ENCODE measurements at regions of chr3 and their contacts with region 1.

Region 1: GRCh38 chr3:51799879-51800749 is 21.1 kb upstream of the IQCF6 start:
- DNase-seq: peak in 1 of 3 donors; percentile 71
- ATAC-seq: peak; percentile 60
- H3K4me3 ChIP-seq: no peak overlapping the region
- H3K4me1 ChIP-seq: no peaks in the 10 kb centered on the region
- CTCF ChIP-seq: peak; percentile 60

Region 2: GRCh38 chr3:50611464-50612233 is 1188.5 kb before region 1 on chr3 and contains the start of gene CISH:
- intact Hi-C with region 1: no loop called
- DNase-seq: peak; percentile 97 to 98 (median 97)
- ATAC-seq: peak; percentile 81
- H3K4me3 ChIP-seq: peak within 1 kb of the TSS; percentile 68
- H3K4me1 ChIP-seq: peaks cover 39% of the 10 kb centered on the region
- CTCF ChIP-seq: no peak
- total RNA-seq, gene CISH: 12.7 to 21.4 (median 19.2) TPM

Region 3: DNA sequence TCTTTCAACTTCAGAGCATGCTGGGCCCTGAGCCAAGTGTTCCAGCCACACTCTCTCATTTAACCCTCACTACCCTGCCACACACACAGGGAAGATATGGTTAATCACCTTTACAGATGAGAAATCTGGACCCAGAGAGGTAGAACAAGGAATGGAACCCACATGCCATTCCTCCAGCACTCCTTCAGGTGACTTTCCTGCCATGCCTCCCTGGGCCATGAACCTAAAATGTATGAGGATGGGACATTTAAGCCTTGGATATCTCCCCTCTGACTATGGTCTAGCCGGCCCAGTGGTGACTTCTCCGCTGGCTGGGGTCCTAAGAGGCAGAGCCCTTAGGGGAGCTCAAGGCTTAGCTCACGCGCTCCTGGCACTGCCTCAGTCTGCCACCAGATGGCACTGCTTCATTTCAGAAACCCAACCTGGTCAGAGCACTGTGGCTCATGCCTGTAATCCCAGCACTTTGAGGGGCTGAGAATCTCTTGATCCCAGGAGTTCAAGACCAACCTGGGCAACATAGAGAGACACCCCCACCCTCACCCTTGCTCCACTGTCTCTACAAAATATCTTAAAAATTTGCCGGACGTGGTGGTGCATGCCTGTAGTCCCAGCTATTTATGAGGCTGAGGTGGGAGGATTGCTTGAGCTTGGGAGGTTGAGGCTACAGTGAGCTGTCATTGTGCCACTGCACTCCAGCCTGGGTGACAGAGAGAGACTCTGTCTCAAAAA is 298.1 kb before region 1 on chr3:
- intact Hi-C with region 1: loop called in 1 of 2 experiments (anchors 10 kb)
- DNase-seq: peak; percentile 72 to 93 (median 88)
- ATAC-seq: peak; percentile 12
- H3K4me3 ChIP-seq: no peak overlapping the region
- H3K4me1 ChIP-seq: no peaks in the 10 kb centered on the region
- CTCF ChIP-seq: peak; percentile 93

Region 4: DNA sequence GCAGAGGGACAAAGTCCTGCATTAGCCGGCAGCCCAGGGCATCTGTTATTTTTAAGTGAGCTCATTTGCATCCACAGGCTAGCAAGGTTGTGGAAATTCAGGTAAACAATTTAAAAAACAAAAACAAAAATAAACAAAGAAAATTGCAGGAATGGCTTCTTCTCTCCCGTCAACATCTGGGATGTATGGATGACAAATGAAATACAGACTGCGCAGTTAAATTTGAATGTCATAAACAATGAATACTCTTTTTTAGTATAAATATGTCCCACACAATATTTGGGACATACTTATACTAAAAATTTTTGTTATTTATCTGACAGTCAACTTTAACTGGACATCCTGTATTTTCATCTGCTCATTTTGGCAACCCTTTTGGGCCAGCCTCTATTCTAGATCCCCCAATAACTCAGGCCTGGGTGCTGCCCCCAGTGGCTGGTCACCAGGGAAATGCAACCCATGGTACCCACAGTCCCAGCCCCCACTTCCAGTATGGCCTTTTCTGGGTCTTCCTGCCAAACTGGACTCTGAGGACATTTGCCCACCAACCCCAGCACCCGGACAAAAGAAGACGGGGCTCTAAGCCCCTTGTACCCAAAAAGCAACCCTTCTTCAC is 80.6 kb before region 1 on chr3:
- intact Hi-C with region 1: loop called in 1 of 2 experiments (anchors 10 kb)
- DNase-seq: no peak
- ATAC-seq: no peak
- H3K4me3 ChIP-seq: no peak overlapping the region
- H3K4me1 ChIP-seq: no peaks in the 10 kb centered on the region
- CTCF ChIP-seq: no peak

Measured in mucosa of descending colon (tissue), 3 donors.